Common myeloid progenitor, CD34-positive (primary cell): ENCODE measurements at regions of chr1 and their contacts with region 1.

Region 1: DNA sequence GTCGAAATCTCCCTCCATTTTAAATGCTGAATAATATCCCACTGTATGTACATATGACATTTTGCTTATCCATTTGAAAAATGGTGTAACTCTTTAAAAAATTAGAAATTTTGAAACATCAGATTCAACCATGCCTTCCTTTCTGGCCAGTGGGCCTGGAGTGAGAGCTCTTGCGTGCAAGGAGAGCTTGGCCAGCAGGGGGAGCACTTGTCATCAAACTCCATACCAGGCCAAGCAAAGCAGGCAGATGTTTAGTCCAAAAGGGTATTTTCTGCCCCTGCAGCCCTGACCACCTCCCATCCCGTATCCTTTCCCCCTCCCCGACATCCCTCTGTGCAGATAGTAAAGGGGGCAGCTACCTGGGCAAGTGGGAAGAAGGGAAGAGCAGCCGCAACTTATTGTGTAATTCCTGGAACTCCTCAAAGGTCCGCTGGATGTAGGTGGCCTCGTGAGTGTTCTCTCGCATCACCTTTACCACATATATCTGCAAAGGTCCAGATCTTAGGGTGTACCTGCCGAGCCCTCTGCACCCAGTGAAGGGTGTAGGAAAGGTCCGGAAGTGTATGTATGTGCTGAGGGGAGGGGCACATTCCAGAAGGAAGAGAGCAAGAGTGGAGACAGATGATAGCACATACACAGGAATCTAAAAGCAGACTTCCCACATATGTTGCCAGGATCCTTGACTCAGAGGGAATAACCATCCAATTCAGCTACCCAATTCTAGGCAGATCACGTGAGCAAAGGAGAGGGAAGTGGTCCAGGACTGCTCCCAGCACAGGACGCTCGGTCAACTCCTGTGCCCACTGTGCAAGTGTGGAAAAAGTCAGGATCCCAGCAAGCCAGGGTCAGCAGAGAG is 19.9 kb upstream of the PPP1R15B start:
- DNase-seq: peak; percentile 80 to 91 (median 85)
- H3K4me3 ChIP-seq: no peak overlapping the region
- H3K27ac ChIP-seq: no peak overlapping the region
- H3K4me1 ChIP-seq: no peaks in the 10 kb centered on the region
- H3K27me3 ChIP-seq: no peaks in the 10 kb centered on the region

Region 2: GRCh38 chr1:204241050-204241449 is 190.5 kb before region 1 on chr1:
- CTCF ChIA-PET with region 1: no interaction called
- POLR2A ChIA-PET with region 1: no interaction called
- DNase-seq: peak; percentile 42 to 65 (median 46)
- H3K4me3 ChIP-seq: no peak overlapping the region
- H3K27ac ChIP-seq: no peak overlapping the region
- H3K4me1 ChIP-seq: no peaks in the 10 kb centered on the region
- H3K27me3 ChIP-seq: no peaks in the 10 kb centered on the region

Region 3: GRCh38 chr1:204341380-204341779 is 90.2 kb before region 1 on chr1:
- CTCF ChIA-PET with region 1: no interaction called
- POLR2A ChIA-PET with region 1: no interaction called
- DNase-seq: no peak
- H3K4me3 ChIP-seq: no peak overlapping the region
- H3K27ac ChIP-seq: no peak overlapping the region
- H3K4me1 ChIP-seq: peaks cover 0 to 17% (median 8%) of the 10 kb centered on the region in 4 experiments
- H3K27me3 ChIP-seq: no peaks in the 10 kb centered on the region

Region 4: DNA sequence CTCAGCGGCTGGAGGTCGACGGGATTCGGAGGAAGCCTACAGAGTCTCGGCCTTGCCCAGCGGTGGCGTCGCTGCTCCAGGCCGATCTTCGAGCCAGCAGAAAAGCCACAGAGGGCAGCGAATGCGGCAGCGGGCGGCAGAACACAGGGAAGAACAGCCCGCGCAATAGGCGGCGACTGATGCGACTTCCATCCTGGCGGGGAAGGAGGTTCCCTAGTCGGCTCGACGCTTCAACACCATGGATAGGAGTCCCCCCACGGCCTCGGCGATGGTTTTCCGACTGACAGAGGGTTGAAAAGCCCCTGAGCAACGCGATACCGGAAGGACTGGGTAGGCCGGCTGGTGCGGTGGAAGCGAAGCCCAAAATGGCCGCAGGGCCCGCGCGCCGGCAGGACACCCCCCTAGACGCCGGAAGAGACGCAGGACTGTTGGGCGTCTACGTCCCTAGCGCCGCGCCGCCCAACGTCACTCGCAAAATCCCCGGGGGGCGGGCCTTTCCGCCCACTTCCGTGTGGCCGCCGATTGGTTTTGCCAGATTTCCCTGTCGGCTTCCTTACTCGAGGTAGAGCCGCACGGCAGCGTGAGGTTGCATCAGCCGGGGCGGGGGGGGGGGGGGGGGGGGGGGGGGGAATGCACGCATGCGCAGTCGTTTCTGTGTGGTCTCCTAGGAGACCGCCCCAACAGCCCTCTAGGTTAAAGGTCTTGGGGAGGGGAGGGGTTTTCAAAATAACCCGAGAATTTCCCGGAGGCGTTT is 19.9 kb before region 1 on chr1 and contains the start of gene PPP1R15B:
- CTCF ChIA-PET with region 1: interaction called, 33 read pairs
- POLR2A ChIA-PET with region 1: no interaction called
- DNase-seq: peak; percentile 98 to 99 (median 99)
- H3K4me3 ChIP-seq: peak within 1 kb of the TSS; percentile 92 to 100 (median 99)
- H3K27ac ChIP-seq: peak within 1 kb of the TSS; percentile 99 to 100
- H3K4me1 ChIP-seq: peaks cover 23 to 57% (median 40%) of the 10 kb centered on the region in 4 experiments
- H3K27me3 ChIP-seq: no peaks in the 10 kb centered on the region

Region 5: GRCh38 chr1:204417231-204417997 is 14.1 kb before region 1 on chr1:
- CTCF ChIA-PET with region 1: interaction called, 33 read pairs
- POLR2A ChIA-PET with region 1: no interaction called
- DNase-seq: peak; percentile 78 to 91 (median 91)
- H3K4me3 ChIP-seq: peak overlapping the region in 4 of 7 experiments; percentile 12 to 39 (median 24)
- H3K27ac ChIP-seq: peak overlapping the region; percentile 27 to 70
- H3K4me1 ChIP-seq: peaks cover 9 to 44% (median 37%) of the 10 kb centered on the region in 4 experiments
- H3K27me3 ChIP-seq: no peaks in the 10 kb centered on the region

Region 6: DNA sequence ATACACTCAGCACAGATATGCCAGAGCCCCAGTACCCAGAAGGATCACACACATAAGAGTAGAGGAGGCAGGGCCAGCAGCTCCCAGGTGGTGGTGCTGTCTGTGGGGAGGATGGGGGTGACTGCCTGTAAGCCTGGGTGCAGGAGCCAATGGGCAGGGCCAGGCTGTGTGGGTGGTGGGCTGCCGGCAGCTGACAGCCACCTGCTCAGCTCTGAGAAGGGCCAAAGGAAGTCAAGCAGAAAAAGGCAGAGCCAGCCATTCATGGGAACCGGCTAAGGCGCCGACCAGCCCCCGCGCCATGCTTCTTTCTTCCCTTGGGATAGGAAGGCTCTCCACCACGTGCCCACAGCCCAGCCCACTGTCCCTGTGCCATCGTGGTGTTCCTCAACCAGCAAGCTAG is 49.0 kb after region 1 on chr1:
- CTCF ChIA-PET with region 1: interaction called, 26 read pairs
- POLR2A ChIA-PET with region 1: no interaction called
- DNase-seq: no peak
- H3K4me3 ChIP-seq: no peak overlapping the region
- H3K27ac ChIP-seq: no peak overlapping the region
- H3K4me1 ChIP-seq: peaks cover 8 to 90% (median 51%) of the 10 kb centered on the region in 4 experiments
- H3K27me3 ChIP-seq: no peaks in the 10 kb centered on the region